ENCODE measurements at regions of chr7 and their contacts with region 1.

Region 1: GRCh38 chr7:36473454-36474282 is 84.0 kb downstream of the ANLN start:
- DNase-seq: peak; percentile 25 to 79 (median 65)
- H3K4me3 ChIP-seq: no peak overlapping the region
- H3K27ac ChIP-seq: no peak overlapping the region
- H3K27me3 ChIP-seq: no peaks in the 10 kb centered on the region
- CTCF ChIP-seq: peak in 54 of 56 donors; percentile 23 to 74 (median 59)

Region 2: GRCh38 chr7:36670585-36671431 is 197.1 kb after region 1 on chr7:
- intact Hi-C with region 1: loop called in 1 of 2 experiments (anchors 5 kb)
- DNase-seq: peak in 9 of 10 donors; percentile 23 to 60 (median 49)
- H3K4me3 ChIP-seq: no peak overlapping the region
- H3K27ac ChIP-seq: no peak overlapping the region
- H3K27me3 ChIP-seq: no peaks in the 10 kb centered on the region
- CTCF ChIP-seq: peak; percentile 56 to 90 (median 84)